ENCODE measurements at regions of chr6 and their contacts with region 1.

Region 1: DNA sequence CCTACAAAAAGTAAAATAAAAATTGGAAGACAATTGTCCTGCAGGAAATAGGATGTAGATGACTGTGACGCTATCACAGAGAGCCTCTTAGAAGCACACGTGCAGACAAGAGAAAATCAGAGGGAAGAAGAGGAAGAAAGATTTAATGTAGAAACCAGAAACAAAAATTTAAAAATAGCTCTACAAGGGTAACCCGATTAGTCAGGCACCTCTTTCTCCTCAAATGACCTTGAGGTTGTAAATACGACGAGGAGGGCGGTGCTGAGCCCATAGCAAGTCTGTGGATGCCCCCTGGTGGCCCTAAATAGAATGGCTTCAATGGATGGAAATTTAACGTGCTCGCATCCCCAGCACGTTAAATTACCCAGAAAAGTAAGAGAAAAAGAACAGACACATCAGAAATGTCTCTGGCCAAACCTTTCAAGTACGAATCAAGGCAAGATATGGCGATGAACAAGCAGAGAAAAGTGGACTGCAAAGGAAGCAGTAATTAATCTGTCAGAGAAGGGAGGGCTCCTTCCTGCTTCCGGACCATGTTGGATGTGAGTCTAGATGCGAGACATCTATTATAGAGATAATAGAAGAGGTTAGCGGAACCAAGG is 4.2 kb upstream of the PRPH2 start:
- DNase-seq: peak; percentile 79 to 89 (median 81)
- H3K4me3 ChIP-seq: peak overlapping the region; percentile 53 to 55
- H3K4me3 Mint-ChIP-seq: peak overlapping the region; percentile 83 to 98 (median 92)
- H3K27ac ChIP-seq: peak overlapping the region; percentile 69
- H3K27ac Mint-ChIP-seq: peak overlapping the region; percentile 86 to 99 (median 98)
- H3K4me1 ChIP-seq: peaks cover 16% of the 10 kb centered on the region
- H3K4me1 Mint-ChIP-seq: peaks cover 11 to 24% (median 18%) of the 10 kb centered on the region in 4 donors
- H3K27me3 ChIP-seq: no peaks in the 10 kb centered on the region
- H3K27me3 Mint-ChIP-seq: no peaks in the 10 kb centered on the region

Region 2: DNA sequence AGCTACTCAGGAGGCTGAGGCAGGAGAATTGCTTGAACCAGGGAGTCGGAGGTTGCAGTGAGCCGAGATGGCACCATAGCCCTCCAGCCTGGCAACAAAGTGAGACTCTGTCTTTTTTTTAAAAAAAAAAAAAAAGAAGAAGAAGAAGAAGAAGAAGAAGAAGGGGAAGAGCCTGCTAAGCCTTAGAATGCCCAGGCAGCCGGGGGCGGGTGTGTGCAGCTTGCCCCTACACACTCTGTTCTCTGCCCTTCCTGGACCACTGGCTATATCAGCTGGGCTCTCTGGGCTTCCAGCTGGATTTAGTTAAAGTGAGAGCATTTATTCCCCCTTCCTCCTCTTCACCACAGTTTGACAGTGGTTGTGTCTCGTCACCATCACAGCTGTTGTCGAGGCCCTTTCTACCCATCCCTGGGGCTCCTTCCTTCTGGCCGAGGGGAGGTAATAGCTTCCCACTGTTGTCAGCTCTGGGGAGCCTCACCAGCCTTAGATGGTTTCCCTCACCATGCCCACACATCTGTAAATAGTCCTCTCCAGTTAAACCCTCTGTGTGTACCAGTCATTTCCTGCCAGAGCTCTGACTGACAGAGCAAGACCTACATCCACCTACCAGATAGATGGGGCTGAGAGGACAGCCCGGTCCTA is 352.4 kb before region 1 on chr6:
- CTCF ChIA-PET with region 1: no interaction called
- POLR2A ChIA-PET with region 1: no interaction called
- intact Hi-C with region 1: no loop called
- DNase-seq: peak in 1 of 5 donors; percentile 24
- H3K4me3 ChIP-seq: no peak overlapping the region
- H3K4me3 Mint-ChIP-seq: peak overlapping the region in 7 of 8 donors; percentile 9 to 77 (median 57)
- H3K27ac ChIP-seq: no peak overlapping the region
- H3K27ac Mint-ChIP-seq: peak overlapping the region; percentile 41 to 92 (median 85)
- H3K4me1 ChIP-seq: peaks cover 66% of the 10 kb centered on the region
- H3K4me1 Mint-ChIP-seq: peaks cover 39 to 72% (median 54%) of the 10 kb centered on the region in 4 donors
- H3K27me3 ChIP-seq: no peaks in the 10 kb centered on the region
- H3K27me3 Mint-ChIP-seq: no peaks in the 10 kb centered on the region

Region 3: DNA sequence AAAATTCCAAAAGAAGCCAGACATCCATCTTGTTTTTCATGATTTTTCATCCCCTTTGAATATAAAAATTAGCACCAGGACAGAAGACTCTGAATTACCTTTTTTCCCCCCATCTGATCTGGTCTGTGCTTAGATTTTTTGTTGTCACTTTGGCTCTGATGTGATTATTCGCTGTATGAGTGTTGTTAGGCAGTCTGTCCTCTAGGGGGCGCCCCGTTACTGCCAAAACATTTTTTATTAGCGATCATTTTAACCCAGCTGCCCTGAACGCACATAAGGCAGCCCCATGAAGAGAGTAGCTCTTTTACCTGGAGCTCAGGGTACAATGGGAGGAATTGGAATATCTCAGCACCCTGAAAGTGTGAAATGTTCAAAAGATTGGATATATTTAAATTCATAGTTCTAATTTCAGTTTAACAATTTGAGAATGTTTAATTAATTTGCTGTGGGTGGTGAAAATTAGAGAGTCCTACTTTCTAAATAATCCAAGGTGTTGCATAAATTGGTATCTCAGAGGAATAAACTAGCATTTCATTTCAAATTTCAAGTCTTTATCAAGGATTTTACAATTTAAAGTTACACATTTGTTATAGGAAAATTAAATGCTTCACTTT is 64.9 kb before region 1 on chr6:
- CTCF ChIA-PET with region 1: interaction called, 96 read pairs
- POLR2A ChIA-PET with region 1: interaction called, 20 read pairs
- intact Hi-C with region 1: loop called (anchors 1 kb)
- DNase-seq: peak; percentile 80 to 84 (median 84)
- H3K4me3 ChIP-seq: no peak overlapping the region
- H3K4me3 Mint-ChIP-seq: no peak overlapping the region
- H3K27ac ChIP-seq: no peak overlapping the region
- H3K27ac Mint-ChIP-seq: peak overlapping the region in 4 of 7 donors; percentile 0 to 15 (median 2)
- H3K4me1 ChIP-seq: no peaks in the 10 kb centered on the region
- H3K4me1 Mint-ChIP-seq: peaks cover 0 to 2% (median 0%) of the 10 kb centered on the region in 4 donors
- H3K27me3 ChIP-seq: no peaks in the 10 kb centered on the region
- H3K27me3 Mint-ChIP-seq: no peaks in the 10 kb centered on the region

Region 4: DNA sequence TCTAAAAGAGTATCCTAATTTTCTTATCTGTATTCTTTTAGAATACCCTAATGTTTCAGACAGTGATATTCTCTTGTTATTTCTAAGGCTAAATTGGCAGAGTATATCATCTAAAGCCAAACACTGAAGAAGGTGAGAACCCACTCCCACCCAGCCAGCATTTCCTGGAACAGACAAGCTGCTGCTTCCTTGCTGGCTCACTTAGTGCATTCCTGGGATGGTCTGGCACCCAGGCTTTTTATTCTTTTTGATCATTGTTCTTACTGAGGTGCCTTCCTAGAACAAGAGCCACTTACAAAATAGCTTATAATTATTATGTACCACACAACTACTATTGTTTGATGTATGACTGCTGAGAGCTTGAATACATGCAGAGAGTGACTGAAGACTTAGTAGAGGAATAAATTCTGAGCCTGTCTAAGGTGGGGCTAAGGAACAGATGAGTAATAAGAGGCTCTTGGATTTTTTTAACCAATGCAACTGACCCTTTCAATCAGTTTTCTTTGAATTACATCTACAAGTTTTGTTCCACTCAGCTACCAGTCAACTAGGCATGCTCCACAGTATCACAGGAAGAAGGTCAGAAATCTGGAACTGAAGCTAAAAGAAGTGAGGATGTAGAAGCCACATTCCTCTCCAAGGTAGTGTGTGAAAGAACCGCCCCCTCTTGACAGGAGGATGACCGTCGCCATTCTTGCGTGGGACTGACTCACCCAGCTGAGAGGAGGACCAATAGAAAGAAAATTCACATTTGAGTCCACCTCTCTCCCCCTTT is 34.3 kb before region 1 on chr6:
- CTCF ChIA-PET with region 1: interaction called, 23 read pairs
- POLR2A ChIA-PET with region 1: interaction called, 8 read pairs
- intact Hi-C with region 1: loop called (anchors 5 kb)
- DNase-seq: no peak
- H3K4me3 ChIP-seq: no peak overlapping the region
- H3K4me3 Mint-ChIP-seq: no peak overlapping the region
- H3K27ac ChIP-seq: no peak overlapping the region
- H3K27ac Mint-ChIP-seq: peak overlapping the region in 5 of 7 donors; percentile 25 to 62 (median 29)
- H3K4me1 ChIP-seq: peaks cover 12% of the 10 kb centered on the region
- H3K4me1 Mint-ChIP-seq: peaks cover 15 to 25% (median 20%) of the 10 kb centered on the region in 4 donors
- H3K27me3 ChIP-seq: no peaks in the 10 kb centered on the region
- H3K27me3 Mint-ChIP-seq: no peaks in the 10 kb centered on the region

Region 5: DNA sequence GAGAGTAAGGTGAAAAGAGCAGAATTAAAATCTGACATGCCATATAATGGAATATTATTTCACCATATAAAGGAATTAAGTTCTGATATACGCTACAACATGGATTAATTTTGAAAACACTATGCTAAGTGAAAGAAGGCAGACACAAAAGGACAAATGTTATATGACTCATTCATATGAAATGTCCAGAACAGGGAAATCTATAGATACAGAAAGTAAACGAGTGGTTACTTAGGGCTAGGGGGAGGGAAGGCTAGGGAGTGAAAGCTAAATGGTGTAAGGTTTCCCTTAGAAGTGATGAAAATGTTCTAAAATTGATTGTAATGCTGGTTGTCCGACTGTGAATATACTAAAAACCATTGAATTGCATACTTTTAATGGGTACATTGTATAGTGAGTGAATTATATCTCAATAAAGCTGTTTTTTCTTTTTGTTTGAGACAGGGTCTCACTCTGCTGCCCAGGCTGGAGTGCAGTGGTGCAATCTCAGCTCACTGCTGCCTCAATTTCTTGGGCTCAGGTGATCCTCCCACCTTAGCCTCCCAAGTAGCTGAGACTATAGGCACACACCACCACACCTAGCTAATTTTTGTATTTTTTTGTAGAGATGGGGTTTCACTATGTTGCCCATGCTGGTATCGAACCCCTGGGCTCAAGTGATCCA is 12.4 kb before region 1 on chr6:
- CTCF ChIA-PET with region 1: interaction called, 12 read pairs
- POLR2A ChIA-PET with region 1: interaction called, 3 read pairs
- intact Hi-C with region 1: no loop called
- DNase-seq: no peak
- H3K4me3 ChIP-seq: no peak overlapping the region
- H3K4me3 Mint-ChIP-seq: no peak overlapping the region
- H3K27ac ChIP-seq: no peak overlapping the region
- H3K27ac Mint-ChIP-seq: peak overlapping the region in 1 of 7 donors; percentile 29
- H3K4me1 ChIP-seq: no peaks in the 10 kb centered on the region
- H3K4me1 Mint-ChIP-seq: peaks cover 0 to 2% (median 0%) of the 10 kb centered on the region in 4 donors
- H3K27me3 ChIP-seq: no peaks in the 10 kb centered on the region
- H3K27me3 Mint-ChIP-seq: no peaks in the 10 kb centered on the region

Region 6: GRCh38 chr6:42890311-42891198 is 164.0 kb after region 1 on chr6:
- CTCF ChIA-PET with region 1: interaction called, 7 read pairs
- POLR2A ChIA-PET with region 1: interaction called, 18 read pairs
- intact Hi-C with region 1: no loop called
- DNase-seq: peak; percentile 87 to 91 (median 89)
- H3K4me3 ChIP-seq: peak overlapping the region; percentile 59 to 97
- H3K4me3 Mint-ChIP-seq: peak overlapping the region; percentile 94 to 99 (median 98)
- H3K27ac ChIP-seq: peak overlapping the region; percentile 92
- H3K27ac Mint-ChIP-seq: peak overlapping the region; percentile 93 to 99 (median 97)
- H3K4me1 ChIP-seq: peaks cover 15% of the 10 kb centered on the region
- H3K4me1 Mint-ChIP-seq: peaks cover 9 to 21% (median 12%) of the 10 kb centered on the region in 4 donors
- H3K27me3 ChIP-seq: no peaks in the 10 kb centered on the region
- H3K27me3 Mint-ChIP-seq: no peaks in the 10 kb centered on the region

Region 7: DNA sequence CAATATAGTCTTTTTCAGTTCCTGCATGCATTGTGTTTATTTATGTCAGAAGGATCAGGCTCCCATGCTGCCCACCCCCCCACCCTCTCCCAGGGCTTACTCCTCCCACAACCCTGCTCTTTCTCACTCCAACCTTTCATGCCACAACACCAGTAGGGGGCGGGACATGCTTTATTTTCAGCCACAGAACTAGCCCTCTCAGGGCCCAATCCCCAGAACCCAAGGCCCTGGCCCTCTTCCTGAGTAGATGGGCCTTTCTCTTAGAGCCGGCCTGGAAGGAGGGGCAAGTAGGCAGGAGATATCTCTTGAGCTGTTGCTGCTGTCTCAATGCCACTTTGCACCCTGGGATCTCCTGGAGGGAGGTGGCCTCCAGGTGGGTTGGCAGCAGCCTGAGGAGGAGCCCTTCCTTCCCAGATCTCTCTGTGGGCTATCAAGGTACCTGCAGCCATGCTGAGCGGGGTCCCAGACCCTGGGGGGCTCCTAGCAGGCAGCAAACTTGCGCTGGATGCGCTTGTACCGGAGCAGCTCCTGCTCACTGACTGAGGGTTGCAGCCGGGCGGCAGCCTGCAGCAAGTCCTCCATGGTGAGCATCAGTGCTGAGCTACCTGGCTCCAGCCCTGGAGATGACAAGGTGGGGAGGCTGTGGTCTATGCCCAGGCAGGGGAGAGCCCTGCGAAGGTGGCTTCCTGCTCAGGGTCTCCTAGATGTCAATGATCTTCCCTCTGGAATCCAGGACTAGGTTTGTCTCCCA is 237.4 kb after region 1 on chr6:
- CTCF ChIA-PET with region 1: no interaction called
- POLR2A ChIA-PET with region 1: no interaction called
- intact Hi-C with region 1: no loop called
- DNase-seq: peak in 3 of 5 donors; percentile 28 to 42 (median 37)
- H3K4me3 ChIP-seq: no peak overlapping the region
- H3K4me3 Mint-ChIP-seq: no peak overlapping the region
- H3K27ac ChIP-seq: no peak overlapping the region
- H3K27ac Mint-ChIP-seq: no peak overlapping the region
- H3K4me1 ChIP-seq: peaks cover 11% of the 10 kb centered on the region
- H3K4me1 Mint-ChIP-seq: peaks cover 7 to 27% (median 11%) of the 10 kb centered on the region in 4 donors
- H3K27me3 ChIP-seq: no peaks in the 10 kb centered on the region
- H3K27me3 Mint-ChIP-seq: no peaks in the 10 kb centered on the region